ENCODE measurements at regions of chr14 and their contacts with region 1.

Region 1: DNA sequence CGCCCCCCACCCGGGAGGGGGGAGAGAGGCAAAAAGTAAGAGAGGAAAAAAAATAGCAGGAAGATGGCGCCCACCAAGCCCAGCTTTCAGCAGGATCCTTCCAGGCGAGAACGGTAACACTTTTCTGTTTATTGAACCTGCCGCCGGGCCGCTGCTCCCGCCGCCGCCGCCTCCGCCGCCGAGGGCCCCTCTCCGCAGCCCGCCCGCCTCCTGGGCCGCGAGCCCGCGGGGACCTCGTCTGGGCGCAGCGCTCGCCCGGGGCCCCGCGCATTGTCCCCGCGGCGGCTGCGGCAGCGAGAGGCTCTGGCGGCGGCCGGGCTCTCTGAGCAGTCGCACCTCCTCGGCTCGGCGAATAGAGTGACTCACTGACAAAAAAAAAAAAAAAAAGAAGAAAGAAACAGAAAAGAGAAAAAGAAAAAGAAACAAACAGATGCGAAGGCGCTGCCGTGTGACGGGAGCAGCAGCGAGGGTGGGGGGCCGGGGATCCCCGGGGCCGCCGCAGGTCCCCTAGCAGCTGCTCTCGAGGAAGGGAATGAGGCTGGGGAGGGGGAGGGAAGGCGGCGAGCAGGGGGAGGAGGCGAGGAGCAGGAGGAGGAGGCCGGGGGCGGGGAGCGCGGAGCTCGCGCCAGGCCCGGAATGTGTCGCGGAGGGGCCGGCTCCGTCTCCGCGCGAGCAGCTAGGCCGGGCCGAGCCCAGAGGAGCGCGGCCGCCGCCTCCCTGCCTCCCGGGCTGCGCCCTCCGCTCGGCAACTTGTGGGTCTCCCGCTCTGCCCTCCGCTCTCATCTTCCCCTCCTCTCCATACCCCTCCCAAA is 781 bp downstream of the NPAS3 start:
- DNase-seq: peak; percentile 85 to 91 (median 85)
- H3K4me3 ChIP-seq: peak overlapping the region; percentile 32 to 86 (median 66)
- H3K27ac ChIP-seq: peak overlapping the region; percentile 64 to 94 (median 81)
- H3K4me1 ChIP-seq: peaks cover 9 to 10% of the 10 kb centered on the region in 2 donors
- H3K27me3 ChIP-seq: peaks cover 20% of the 10 kb centered on the region
- CTCF ChIP-seq: no peak
- POLR2A ChIP-seq: peak in 1 of 2 donors; percentile 59

Region 2: DNA sequence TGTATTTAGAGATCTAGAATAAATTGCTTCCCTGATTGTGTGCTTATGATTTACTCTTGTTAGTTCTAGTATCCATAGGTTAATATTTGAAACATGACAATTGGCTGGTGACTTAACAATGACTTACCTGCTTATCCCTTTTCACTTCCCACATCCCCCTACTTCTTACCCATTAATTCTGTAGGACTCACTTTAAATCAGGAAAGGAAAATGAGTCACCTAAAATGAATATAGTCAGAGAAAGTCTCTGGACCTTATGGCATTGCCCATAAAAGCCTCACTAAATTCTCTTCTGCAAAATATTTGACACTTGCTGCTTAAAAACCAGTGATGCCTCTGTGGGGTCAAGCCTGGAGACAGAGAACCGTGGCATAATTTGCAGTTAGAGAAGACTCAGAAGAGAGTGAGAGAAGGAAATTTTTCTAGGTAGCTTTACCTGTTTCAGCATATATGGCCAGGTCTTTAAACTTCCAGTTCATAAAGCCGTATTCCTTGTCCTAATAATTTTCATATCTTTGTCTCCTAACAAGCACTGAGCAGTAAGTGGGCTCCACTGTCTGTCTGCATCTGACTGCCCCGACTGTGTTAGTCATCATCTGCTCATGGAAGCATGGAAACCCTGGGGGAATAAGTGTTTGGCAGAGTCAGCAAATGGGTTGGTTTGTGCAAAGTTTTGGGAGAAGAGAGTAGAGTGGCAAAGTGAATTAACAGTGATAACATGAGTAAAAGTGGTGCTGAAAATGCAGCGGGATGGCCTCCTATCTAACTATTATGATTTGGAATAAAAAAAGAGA is 316.0 kb before region 1 on chr14:
- intact Hi-C with region 1: no loop called
- DNase-seq: no peak
- H3K4me3 ChIP-seq: no peak overlapping the region
- H3K27ac ChIP-seq: no peak overlapping the region
- H3K4me1 ChIP-seq: no peaks in the 10 kb centered on the region
- H3K27me3 ChIP-seq: no peaks in the 10 kb centered on the region
- CTCF ChIP-seq: no peak
- POLR2A ChIP-seq: no peak

Region 3: GRCh38 chr14:32724867-32725471 is 214.5 kb before region 1 on chr14:
- intact Hi-C with region 1: loop called in 1 of 2 experiments (anchors 10 kb)
- DNase-seq: no peak
- H3K4me3 ChIP-seq: peak overlapping the region in 1 of 4 donors; percentile 34
- H3K27ac ChIP-seq: no peak overlapping the region
- H3K4me1 ChIP-seq: peaks cover 0 to 4% of the 10 kb centered on the region in 2 donors
- H3K27me3 ChIP-seq: no peaks in the 10 kb centered on the region
- CTCF ChIP-seq: no peak
- POLR2A ChIP-seq: no peak